SK-N-SH (cell line): ENCODE measurements at regions of chr13 and their contacts with region 1.

Region 1: GRCh38 chr13:66634384-66634783 is 595.8 kb downstream of the PCDH9 start:
- DNase-seq: no peak
- H3K4me3 ChIP-seq: no peak overlapping the region
- H3K27ac ChIP-seq: peak overlapping the region in 1 of 2 experiments; percentile 79; a peak in 2 of 4 replicates
- H3K4me1 ChIP-seq: peaks cover 0 to 14% of the 10 kb centered on the region in 2 experiments; a peak in 3 of 4 replicates
- H3K27me3 ChIP-seq: no peaks in the 10 kb centered on the region
- CTCF ChIP-seq: no peak
- EP300 ChIP-seq: no peak
- RAD21 ChIP-seq: no peak

Region 2: GRCh38 chr13:66618702-66619101 is 15.7 kb before region 1 on chr13:
- CTCF ChIA-PET with region 1: interaction called, 12 read pairs
- POLR2A ChIA-PET with region 1: no interaction called
- DNase-seq: peak; percentile 48
- H3K4me3 ChIP-seq: no peak overlapping the region
- H3K27ac ChIP-seq: no peak overlapping the region
- H3K4me1 ChIP-seq: no peaks in the 10 kb centered on the region
- H3K27me3 ChIP-seq: no peaks in the 10 kb centered on the region
- CTCF ChIP-seq: peak; percentile 60
- EP300 ChIP-seq: no peak
- RAD21 ChIP-seq: peak; percentile 63